ENCODE measurements at regions of chr7 and their contacts with region 1.

Region 1: GRCh38 chr7:4470246-4470645 is 211.8 kb upstream of the FOXK1 start:
- DNase-seq: no peak
- ATAC-seq: no peak
- H3K4me3 ChIP-seq: no peak overlapping the region
- H3K27ac ChIP-seq: no peak overlapping the region
- H3K4me1 ChIP-seq: no peaks in the 10 kb centered on the region
- H3K27me3 ChIP-seq: peaks cover 11% of the 10 kb centered on the region
- CTCF ChIP-seq: no peak
- POLR2A ChIP-seq: no peak
- RAD21 ChIP-seq: no peak

Region 2: GRCh38 chr7:3922175-3922635 is 548.0 kb before region 1 on chr7:
- CTCF ChIA-PET with region 1: no interaction called
- POLR2A ChIA-PET with region 1: no interaction called
- RAD21 ChIA-PET with region 1: no interaction called
- intact Hi-C with region 1: loop called (anchors 5 kb)
- DNase-seq: peak; percentile 72
- ATAC-seq: peak; percentile 96
- H3K4me3 ChIP-seq: no peak overlapping the region
- H3K27ac ChIP-seq: no peak overlapping the region
- H3K4me1 ChIP-seq: peaks cover 0 to 5% of the 10 kb centered on the region in 2 experiments; a peak in 3 of 4 replicates
- H3K27me3 ChIP-seq: 0 out of 2 replicates have a peak, but pooled peaks cover 6% of the 10 kb centered on the region
- CTCF ChIP-seq: peak; percentile 4 to 41 (median 18); a peak in 2 of 6 replicates
- POLR2A ChIP-seq: no peak
- RAD21 ChIP-seq: peak; percentile 49